ENCODE measurements at regions of chr7 and their contacts with region 1.

Region 1: GRCh38 chr7:107462740-107463444 is 7.0 kb upstream of the GPR22 start:
- DNase-seq: peak; percentile 57
- ATAC-seq: peak; percentile 80
- H3K4me3 Mint-ChIP-seq: no peak overlapping the region
- H3K27ac Mint-ChIP-seq: no peak overlapping the region
- H3K4me1 Mint-ChIP-seq: no peaks in the 10 kb centered on the region
- H3K27me3 Mint-ChIP-seq: no peaks in the 10 kb centered on the region

Region 2: DNA sequence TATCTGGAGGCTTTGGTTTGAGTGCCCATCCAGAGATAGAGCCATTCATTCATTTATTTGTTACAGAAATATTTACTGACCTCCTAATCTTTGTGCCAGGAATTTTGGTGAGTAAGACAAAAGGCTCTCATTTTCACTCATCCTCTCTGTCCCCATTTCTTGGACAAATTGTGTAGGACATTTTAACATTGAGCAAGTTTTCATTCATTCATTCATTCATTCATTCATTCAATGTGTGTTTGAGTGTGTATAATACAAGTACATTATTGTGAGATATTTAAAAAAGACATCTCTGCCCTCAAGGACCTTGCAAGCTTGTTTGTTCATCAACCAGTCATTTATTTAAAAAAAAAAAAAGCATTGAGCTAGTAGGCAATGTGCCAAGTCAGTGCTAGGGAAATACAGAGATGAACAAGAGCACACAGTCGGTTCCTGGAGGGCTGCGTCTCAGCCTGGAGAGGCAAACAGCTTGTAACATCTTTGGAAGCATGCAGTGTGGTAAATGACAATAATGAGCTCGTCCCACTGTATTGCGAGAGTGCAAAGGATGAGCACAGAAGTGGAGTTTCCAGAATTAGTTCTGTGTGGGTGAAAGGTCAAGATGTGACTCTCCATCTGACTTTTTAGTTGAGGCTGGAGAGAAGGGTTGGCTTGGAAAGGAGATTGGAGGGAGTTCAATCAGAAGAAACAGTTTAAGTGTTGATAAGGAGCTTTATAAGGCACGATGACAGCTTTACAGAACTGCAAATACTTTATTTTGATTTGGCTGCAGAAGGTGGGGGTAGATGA is 344.6 kb before region 1 on chr7:
- CTCF ChIA-PET with region 1: no interaction called
- POLR2A ChIA-PET with region 1: no interaction called
- DNase-seq: no peak
- ATAC-seq: no peak
- H3K4me3 Mint-ChIP-seq: no peak overlapping the region
- H3K27ac Mint-ChIP-seq: no peak overlapping the region
- H3K4me1 Mint-ChIP-seq: peaks cover 3% of the 10 kb centered on the region
- H3K27me3 Mint-ChIP-seq: peaks cover 6% of the 10 kb centered on the region

Region 3: DNA sequence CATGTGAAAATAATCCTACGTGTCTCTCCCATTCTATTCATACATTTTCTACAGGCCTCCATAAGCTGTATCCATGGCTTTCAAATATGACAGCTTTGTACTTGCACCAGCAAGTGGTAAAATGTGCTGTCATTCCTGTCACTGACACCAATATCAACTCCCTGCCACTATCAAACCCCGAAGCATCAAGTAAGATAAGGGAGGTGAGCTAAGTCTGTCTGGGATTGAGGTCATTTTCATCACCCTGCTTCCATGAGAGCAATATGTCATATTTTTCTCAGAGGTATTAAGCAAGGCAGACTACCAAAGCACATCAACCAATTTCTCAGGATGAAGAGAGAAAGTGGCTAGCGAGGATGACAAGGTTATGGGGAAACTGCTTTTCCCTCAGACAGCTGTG is 18.0 kb after region 1 on chr7:
- CTCF ChIA-PET with region 1: interaction called, 11 read pairs
- POLR2A ChIA-PET with region 1: no interaction called
- DNase-seq: no peak
- ATAC-seq: no peak
- H3K4me3 Mint-ChIP-seq: no peak overlapping the region
- H3K27ac Mint-ChIP-seq: no peak overlapping the region
- H3K4me1 Mint-ChIP-seq: peaks cover 5% of the 10 kb centered on the region
- H3K27me3 Mint-ChIP-seq: no peaks in the 10 kb centered on the region

Region 4: DNA sequence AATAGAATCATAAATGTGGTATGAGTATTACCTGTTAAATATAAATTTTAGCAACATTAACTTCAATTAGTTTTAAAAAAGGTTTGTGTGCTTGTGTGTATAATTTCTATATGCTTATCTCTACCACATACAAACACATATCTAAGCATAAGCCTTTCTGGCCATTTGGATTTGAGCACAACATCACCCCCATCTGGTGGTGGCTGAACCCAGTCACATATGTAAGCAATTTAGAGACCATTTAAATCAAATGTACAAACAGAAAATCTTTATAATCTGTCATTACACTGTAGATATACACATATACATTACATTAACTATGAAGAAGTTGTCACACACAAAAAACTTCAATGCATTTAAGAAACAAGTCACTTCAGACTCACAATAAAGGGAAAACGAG is 38.7 kb after region 1 on chr7:
- CTCF ChIA-PET with region 1: interaction called, 24 read pairs
- POLR2A ChIA-PET with region 1: no interaction called
- DNase-seq: peak; percentile 40
- ATAC-seq: no peak
- H3K4me3 Mint-ChIP-seq: no peak overlapping the region
- H3K27ac Mint-ChIP-seq: no peak overlapping the region
- H3K4me1 Mint-ChIP-seq: peaks cover 8% of the 10 kb centered on the region
- H3K27me3 Mint-ChIP-seq: no peaks in the 10 kb centered on the region

Region 5: DNA sequence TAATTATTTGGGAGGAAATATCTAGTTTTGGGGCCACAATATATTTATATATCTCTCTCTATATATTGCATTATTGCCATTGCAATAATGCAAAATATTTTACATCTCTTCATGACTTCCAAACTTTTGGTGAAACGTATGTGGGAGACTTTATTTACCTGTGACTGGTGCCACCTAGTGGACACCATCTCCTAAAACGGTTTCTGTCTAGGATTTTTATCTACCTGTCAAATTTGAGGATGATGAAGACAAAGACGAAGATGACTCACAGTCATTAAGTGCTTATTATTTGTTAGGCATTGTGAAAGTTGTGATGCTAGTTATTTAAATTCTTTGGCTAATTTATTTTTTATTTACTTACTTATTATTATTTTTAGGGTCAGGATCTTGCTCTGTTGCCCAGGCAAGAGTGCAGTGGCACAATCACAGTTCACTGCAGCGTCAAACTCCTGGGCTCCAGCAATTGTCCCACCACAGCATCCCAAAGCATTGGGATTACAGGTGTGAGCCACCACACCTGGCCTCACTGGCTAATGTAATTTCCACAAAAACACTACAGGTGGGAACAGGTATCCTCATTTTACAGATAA is 262.4 kb after region 1 on chr7:
- CTCF ChIA-PET with region 1: interaction called, 27 read pairs
- POLR2A ChIA-PET with region 1: no interaction called
- DNase-seq: peak; percentile 71
- ATAC-seq: no peak
- H3K4me3 Mint-ChIP-seq: no peak overlapping the region
- H3K27ac Mint-ChIP-seq: no peak overlapping the region
- H3K4me1 Mint-ChIP-seq: no peaks in the 10 kb centered on the region
- H3K27me3 Mint-ChIP-seq: peaks cover 34% of the 10 kb centered on the region

Measured in activated CD8-positive, alpha-beta T cell treated with anti-CD3 and anti-CD28 coated beads, Interleukin-2, amount 10 ng/mL, durations not matched to agents 7 days and 5 days (primary cell).